ENCODE measurements at regions of chr18 and their contacts with region 1.

Region 1: GRCh38 chr18:45212181-45213039 is 402.9 kb upstream of the SLC14A2 start:
- DNase-seq: peak; percentile 75 to 89 (median 83)
- H3K4me3 ChIP-seq: no peak overlapping the region
- H3K27ac ChIP-seq: no peak overlapping the region
- H3K4me1 ChIP-seq: no peaks in the 10 kb centered on the region
- H3K27me3 ChIP-seq: no peaks in the 10 kb centered on the region
- CTCF ChIP-seq: peak; percentile 75 to 87 (median 87)
- EP300 ChIP-seq: no peak
- POLR2A ChIP-seq: peak; percentile 20

Region 2: DNA sequence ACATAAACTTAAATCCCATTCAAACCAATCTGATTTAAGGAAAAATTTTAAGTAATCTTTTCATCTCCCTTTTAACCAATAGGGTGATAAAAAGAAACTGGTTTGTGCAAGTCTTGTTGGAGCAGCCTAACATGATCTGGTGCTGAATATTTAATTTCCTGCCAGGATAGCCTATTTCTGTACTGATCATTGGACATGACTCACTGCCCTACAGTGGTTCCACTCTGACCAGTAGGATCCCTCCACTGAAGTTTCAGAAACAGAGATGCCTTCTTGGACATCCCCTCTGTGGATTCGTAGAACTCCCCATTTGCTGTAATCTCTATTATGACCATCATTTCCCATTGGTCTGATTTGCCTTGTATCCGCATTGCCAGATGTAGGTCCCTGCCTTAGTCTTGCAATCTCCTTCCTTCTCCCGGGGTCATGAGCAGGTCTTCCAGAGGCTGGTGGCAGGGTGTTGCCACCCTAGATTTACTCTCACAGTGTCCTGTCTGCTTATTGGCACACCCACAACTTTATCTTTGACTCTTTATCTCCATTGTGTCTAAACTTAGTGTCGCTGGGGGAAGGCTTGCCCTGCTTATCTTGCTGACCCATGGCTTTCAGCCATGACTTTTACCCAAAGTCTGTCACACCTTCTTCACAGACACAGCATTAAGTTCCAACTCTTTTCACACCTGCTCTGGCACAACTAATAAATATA is 544.0 kb before region 1 on chr18:
- intact Hi-C with region 1: loop called in 2 of 4 experiments (anchors 10 kb)
- DNase-seq: no peak
- H3K4me3 ChIP-seq: no peak overlapping the region
- H3K27ac ChIP-seq: no peak overlapping the region
- H3K4me1 ChIP-seq: peaks cover 2% of the 10 kb centered on the region
- H3K27me3 ChIP-seq: no peaks in the 10 kb centered on the region
- CTCF ChIP-seq: no peak
- EP300 ChIP-seq: no peak
- POLR2A ChIP-seq: no peak

Region 3: GRCh38 chr18:46226461-46226860 is 1014.1 kb after region 1 on chr18:
- intact Hi-C with region 1: no loop called
- DNase-seq: no peak
- H3K4me3 ChIP-seq: no peak overlapping the region
- H3K27ac ChIP-seq: no peak overlapping the region
- H3K4me1 ChIP-seq: peaks cover 1% of the 10 kb centered on the region
- H3K27me3 ChIP-seq: no peaks in the 10 kb centered on the region
- CTCF ChIP-seq: no peak
- EP300 ChIP-seq: no peak
- POLR2A ChIP-seq: no peak

Measured in ovary (tissue), 10 donors.